BJ (cell line): ENCODE measurements at regions of chr15 and their contacts with region 1.

Region 1: DNA sequence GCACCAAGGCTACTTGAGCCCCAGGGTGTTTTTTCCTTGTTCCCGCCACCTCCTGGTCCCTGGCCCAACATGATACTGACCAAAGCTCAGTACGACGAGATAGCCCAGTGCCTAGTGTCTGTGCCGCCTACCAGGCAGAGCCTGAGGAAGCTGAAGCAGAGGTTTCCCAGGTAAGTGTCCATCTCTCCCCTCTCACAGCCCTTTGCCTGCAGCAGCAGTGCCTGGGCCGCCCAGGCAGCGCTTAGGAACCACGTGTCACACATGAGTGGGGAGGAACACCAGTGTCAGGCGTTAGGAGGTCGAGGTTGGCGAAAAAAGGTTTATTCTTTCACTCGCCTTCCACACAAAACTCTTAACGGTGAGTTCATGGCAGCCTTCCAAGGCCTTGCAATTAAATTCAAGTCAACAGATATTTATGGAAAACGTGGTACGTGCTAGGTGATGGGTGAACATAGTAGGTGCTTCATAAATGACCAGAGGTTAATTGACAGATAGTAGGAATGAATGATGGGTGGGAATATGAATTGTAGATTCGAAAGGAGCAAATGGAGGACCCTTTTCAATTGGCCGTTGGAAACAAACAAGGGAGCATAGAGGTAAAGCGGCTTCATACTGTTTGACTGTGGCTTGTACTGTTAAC is 486 bp downstream of the CDIN1 start:
- DNase-seq: no peak
- H3K4me3 ChIP-seq: peak overlapping the region; percentile 61
- H3K27me3 ChIP-seq: no peaks in the 10 kb centered on the region
- CTCF ChIP-seq: no peak

Region 2: GRCh38 chr15:36567445-36567844 is 12.5 kb before region 1 on chr15:
- CTCF ChIA-PET with region 1: no interaction called
- POLR2A ChIA-PET with region 1: no interaction called
- DNase-seq: no peak
- H3K4me3 ChIP-seq: no peak overlapping the region
- H3K27me3 ChIP-seq: no peaks in the 10 kb centered on the region
- CTCF ChIP-seq: no peak

Region 3: DNA sequence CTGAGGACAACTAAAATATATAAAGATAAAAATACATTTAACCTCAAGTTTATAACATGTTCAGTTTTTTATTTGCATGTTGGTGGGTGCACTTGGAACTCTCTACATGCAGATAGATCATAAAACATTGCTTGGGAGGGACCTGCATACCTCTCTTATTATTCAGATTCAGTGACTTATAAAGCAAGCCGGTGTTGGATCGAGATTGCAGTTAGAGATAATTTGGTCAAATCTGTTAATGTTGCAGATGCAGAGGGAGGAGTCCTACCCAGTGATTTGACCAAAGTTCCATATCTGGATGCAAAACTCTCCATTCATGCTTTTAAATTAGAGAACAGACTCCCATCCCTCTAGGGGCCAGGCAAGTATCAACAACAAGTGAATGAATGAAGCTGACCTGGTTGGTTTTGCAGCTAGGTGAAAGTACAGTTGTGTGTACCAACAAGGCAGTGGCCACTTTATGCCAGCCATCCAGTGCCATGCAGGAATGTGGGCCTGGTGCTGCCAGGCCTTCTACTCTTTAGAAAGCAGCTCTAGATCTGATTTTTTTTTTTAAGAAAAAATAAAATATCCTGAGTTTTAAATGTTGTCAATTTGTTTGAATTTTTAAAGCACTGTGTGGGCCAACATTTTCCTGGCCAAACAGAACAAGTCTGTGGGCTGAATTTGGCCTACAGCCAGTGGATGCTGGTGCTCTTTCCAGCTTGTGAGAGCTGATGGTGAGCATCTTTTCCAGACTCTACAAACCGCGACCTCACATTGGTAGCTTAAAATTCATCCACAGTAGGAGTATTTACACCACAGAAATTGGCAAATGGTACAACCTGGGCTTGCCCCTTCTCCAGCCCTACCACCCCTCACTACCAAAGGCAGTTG is 11.9 kb after region 1 on chr15:
- CTCF ChIA-PET with region 1: interaction called, 12 read pairs
- POLR2A ChIA-PET with region 1: no interaction called
- DNase-seq: no peak
- H3K4me3 ChIP-seq: no peak overlapping the region
- H3K27me3 ChIP-seq: no peaks in the 10 kb centered on the region
- CTCF ChIP-seq: no peak